PC-9 (cell line): ENCODE measurements at regions of chr7 and their contacts with region 1.

Region 1: GRCh38 chr7:98872328-98872924 is 2.6 kb upstream of the TMEM130 start:
- DNase-seq: peak in 1 of 2 experiments; percentile 26
- H3K4me3 ChIP-seq: no peak overlapping the region
- H3K27ac ChIP-seq: no peak overlapping the region
- H3K4me1 ChIP-seq: no peaks in the 10 kb centered on the region
- H3K27me3 ChIP-seq: no peaks in the 10 kb centered on the region
- CTCF ChIP-seq: peak; percentile 61

Region 2: GRCh38 chr7:98434095-98434494 is 438.3 kb before region 1 on chr7:
- CTCF ChIA-PET with region 1: interaction called, 4 read pairs
- POLR2A ChIA-PET with region 1: no interaction called
- intact Hi-C with region 1: loop called (anchors 1 kb)
- DNase-seq: no peak
- H3K4me3 ChIP-seq: no peak overlapping the region
- H3K27ac ChIP-seq: no peak overlapping the region
- H3K4me1 ChIP-seq: no peaks in the 10 kb centered on the region
- H3K27me3 ChIP-seq: no peaks in the 10 kb centered on the region
- CTCF ChIP-seq: no peak

Region 3: GRCh38 chr7:98584830-98585229 is 287.6 kb before region 1 on chr7:
- CTCF ChIA-PET with region 1: no interaction called
- POLR2A ChIA-PET with region 1: no interaction called
- intact Hi-C with region 1: no loop called
- DNase-seq: no peak
- H3K4me3 ChIP-seq: no peak overlapping the region
- H3K27ac ChIP-seq: no peak overlapping the region
- H3K4me1 ChIP-seq: no peaks in the 10 kb centered on the region
- H3K27me3 ChIP-seq: peaks cover 72% of the 10 kb centered on the region
- CTCF ChIP-seq: no peak

Region 4: DNA sequence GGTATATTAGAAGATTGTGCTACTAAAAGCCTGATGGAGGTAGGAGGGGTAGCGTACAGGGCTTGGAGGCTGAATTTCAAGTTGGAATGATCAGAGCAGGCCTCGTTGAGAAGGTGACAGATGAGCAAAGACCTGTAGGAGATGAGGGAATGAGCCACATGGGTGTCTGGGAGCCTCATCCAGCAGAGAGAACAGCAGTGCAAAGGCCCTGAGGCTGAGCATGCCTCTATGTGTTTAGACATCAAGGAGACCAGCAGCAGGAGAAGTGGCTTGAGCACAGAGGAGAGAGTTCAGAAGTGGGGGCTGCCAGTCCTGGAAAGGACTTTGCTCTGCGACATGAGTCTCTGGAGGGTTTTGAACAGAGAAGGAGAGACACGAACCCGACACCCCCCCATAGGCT is 114.3 kb before region 1 on chr7:
- CTCF ChIA-PET with region 1: no interaction called
- POLR2A ChIA-PET with region 1: no interaction called
- intact Hi-C with region 1: no loop called
- DNase-seq: no peak
- H3K4me3 ChIP-seq: no peak overlapping the region
- H3K27ac ChIP-seq: no peak overlapping the region
- H3K4me1 ChIP-seq: no peaks in the 10 kb centered on the region
- H3K27me3 ChIP-seq: peaks cover 48% of the 10 kb centered on the region; the same call in 1 of the 2 replicates
- CTCF ChIP-seq: no peak